ENCODE measurements at regions of chr22 and their contacts with region 1.

Region 1: GRCh38 chr22:31630331-31631329 is 31.4 kb downstream of the PISD start:
- DNase-seq: peak; percentile 73 to 91 (median 83)
- H3K4me3 ChIP-seq: peak overlapping the region; percentile 47 to 80 (median 55)
- H3K4me3 Mint-ChIP-seq: peak overlapping the region; percentile 81 to 87
- H3K27ac ChIP-seq: peak overlapping the region; percentile 73 to 75
- H3K27ac Mint-ChIP-seq: peak overlapping the region; percentile 86 to 96 (median 90)
- H3K4me1 ChIP-seq: peaks cover 51 to 66% of the 10 kb centered on the region in 2 donors
- H3K4me1 Mint-ChIP-seq: peaks cover 60% of the 10 kb centered on the region
- H3K27me3 ChIP-seq: no peaks in the 10 kb centered on the region
- H3K27me3 Mint-ChIP-seq: peaks cover 0 to 3% (median 0%) of the 10 kb centered on the region in 3 donors
- CTCF ChIP-seq: no peak

Region 2: GRCh38 chr22:31345331-31346254 is 285.0 kb before region 1 on chr22:
- intact Hi-C with region 1: loop called (anchors 5 to 10 kb)
- DNase-seq: peak; percentile 74 to 84 (median 80)
- H3K4me3 ChIP-seq: peak overlapping the region; percentile 62 to 86 (median 80)
- H3K4me3 Mint-ChIP-seq: peak overlapping the region; percentile 81 to 90
- H3K27ac ChIP-seq: peak overlapping the region in 1 of 2 donors; percentile 41
- H3K27ac Mint-ChIP-seq: peak overlapping the region in 6 of 7 donors; percentile 58 to 85 (median 68)
- H3K4me1 ChIP-seq: peaks cover 37 to 47% of the 10 kb centered on the region in 2 donors
- H3K4me1 Mint-ChIP-seq: peaks cover 57% of the 10 kb centered on the region
- H3K27me3 ChIP-seq: no peaks in the 10 kb centered on the region
- H3K27me3 Mint-ChIP-seq: peaks cover 2 to 3% (median 2%) of the 10 kb centered on the region in 3 donors
- CTCF ChIP-seq: peak; percentile 97

Region 3: DNA sequence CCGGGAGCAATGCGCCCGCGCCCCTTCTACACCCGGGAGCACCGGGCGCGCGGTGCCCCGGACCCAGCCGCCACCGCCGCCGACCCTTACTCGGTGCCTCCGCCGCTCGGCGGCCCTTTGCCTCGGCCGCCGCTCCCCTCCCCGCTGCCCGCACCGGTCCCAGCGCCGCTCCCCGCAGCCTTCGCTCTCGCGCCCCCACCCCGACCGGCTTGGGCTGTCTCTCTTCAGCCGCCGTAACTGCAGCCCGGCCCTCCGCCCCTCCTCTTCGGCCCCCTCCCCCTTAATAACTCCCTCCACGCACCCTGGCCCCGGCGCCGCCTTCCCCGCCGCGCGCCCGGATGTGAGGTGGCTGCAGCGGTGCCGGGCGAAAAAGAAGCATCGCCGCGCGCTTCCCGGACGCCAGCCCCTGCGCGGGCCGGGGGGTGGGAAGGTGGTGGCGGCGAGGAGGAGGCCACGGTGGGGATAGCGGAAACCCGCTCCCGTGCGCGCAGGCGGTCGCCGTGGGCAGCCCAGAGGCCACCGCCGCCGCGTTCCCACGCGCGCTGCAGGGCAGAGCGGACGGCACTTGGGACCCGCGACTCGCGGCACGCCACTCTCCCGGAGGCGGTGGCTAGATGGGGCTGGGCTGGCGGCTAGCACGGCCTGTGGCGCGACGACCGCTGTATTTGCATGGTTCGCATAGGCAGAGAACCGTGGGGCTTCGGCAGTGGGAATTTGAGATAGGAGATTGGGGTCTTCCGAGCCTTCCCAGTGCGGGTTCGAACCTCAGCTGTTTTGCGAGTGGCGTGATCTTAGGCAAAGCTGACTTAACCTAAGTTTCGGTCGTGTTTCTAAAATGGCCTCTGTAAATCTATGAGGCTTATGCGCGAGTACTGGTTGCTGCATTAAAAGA is 140.8 kb before region 1 on chr22 and contains the start of gene EIF4ENIF1:
- intact Hi-C with region 1: loop called (anchors 5 to 10 kb)
- DNase-seq: peak; percentile 46 to 75 (median 69)
- H3K4me3 ChIP-seq: peak within 1 kb of the TSS; percentile 70 to 88 (median 81)
- H3K4me3 Mint-ChIP-seq: peak within 1 kb of the TSS; percentile 92 to 95
- H3K27ac ChIP-seq: peak within 1 kb of the TSS; percentile 94 to 98
- H3K27ac Mint-ChIP-seq: peak within 1 kb of the TSS; percentile 97 to 99 (median 98)
- H3K4me1 ChIP-seq: peaks cover 24 to 29% of the 10 kb centered on the region in 2 donors
- H3K4me1 Mint-ChIP-seq: peaks cover 28% of the 10 kb centered on the region
- H3K27me3 ChIP-seq: no peaks in the 10 kb centered on the region
- H3K27me3 Mint-ChIP-seq: peaks cover 0 to 3% (median 0%) of the 10 kb centered on the region in 3 donors
- CTCF ChIP-seq: no peak
- polyA plus RNA-seq, gene EIF4ENIF1: 2.5 to 17.0 (median 11.5) TPM

Region 4: DNA sequence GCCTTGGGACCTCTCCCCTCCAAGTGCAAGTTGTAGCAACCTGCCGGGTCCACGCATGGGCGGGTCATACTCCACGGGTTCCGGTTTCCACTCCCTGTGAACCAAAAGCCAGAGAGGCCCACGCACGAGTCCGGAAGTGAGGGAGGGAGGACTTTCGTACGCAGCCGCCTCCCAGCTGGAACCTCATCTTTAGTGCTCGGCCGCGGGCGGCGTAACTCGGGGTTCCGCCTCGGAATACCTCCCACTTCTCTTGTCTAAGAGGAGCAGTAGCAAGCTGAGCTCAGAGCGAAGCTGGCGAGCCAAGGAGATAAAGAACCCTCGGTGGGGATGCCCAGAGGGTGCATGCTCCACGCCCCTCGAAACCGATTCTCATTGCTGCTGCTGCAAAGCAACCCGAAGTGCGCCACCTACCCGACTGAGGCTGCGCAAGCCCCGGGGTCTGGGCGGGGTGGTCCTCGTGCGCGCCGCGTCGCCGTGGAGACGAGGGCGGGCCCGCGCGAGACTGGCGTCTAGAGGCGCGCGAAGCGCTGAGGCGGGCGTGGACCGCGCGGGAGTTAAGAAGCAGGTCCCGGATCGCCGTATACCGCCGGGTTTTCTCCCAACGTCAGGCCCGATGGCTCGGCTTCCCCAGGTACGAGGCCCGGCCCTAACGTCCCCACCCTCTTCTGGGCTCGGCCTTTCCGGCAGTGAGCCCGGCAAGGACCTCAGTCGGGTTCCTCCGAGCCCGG is 134.5 kb before region 1 on chr22 and contains the start of gene SFI1:
- intact Hi-C with region 1: loop called in 1 of 2 experiments (anchors 10 kb)
- DNase-seq: peak; percentile 82 to 85 (median 84)
- H3K4me3 ChIP-seq: peak within 1 kb of the TSS; percentile 49 to 93 (median 90)
- H3K4me3 Mint-ChIP-seq: peak within 1 kb of the TSS; percentile 92 to 96
- H3K27ac ChIP-seq: peak within 1 kb of the TSS; percentile 82 to 83
- H3K27ac Mint-ChIP-seq: peak within 1 kb of the TSS; percentile 89 to 96 (median 94)
- H3K4me1 ChIP-seq: peaks cover 22 to 30% of the 10 kb centered on the region in 2 donors
- H3K4me1 Mint-ChIP-seq: peaks cover 18% of the 10 kb centered on the region
- H3K27me3 ChIP-seq: no peaks in the 10 kb centered on the region
- H3K27me3 Mint-ChIP-seq: peaks cover 0 to 3% (median 2%) of the 10 kb centered on the region in 3 donors
- CTCF ChIP-seq: peak; percentile 25
- polyA plus RNA-seq, gene SFI1: 1.7 to 43.4 (median 3.6) TPM

Region 5: GRCh38 chr22:31561238-31561887 is 69.3 kb before region 1 on chr22:
- intact Hi-C with region 1: loop called (anchors 2 to 5 kb)
- DNase-seq: peak; percentile 6 to 31 (median 11)
- H3K4me3 ChIP-seq: no peak overlapping the region
- H3K4me3 Mint-ChIP-seq: no peak overlapping the region
- H3K27ac ChIP-seq: no peak overlapping the region
- H3K27ac Mint-ChIP-seq: peak overlapping the region in 2 of 7 donors; percentile 25 to 32
- H3K4me1 ChIP-seq: no peaks in the 10 kb centered on the region
- H3K4me1 Mint-ChIP-seq: no peaks in the 10 kb centered on the region
- H3K27me3 ChIP-seq: no peaks in the 10 kb centered on the region
- H3K27me3 Mint-ChIP-seq: peaks cover 0 to 1% (median 0%) of the 10 kb centered on the region in 3 donors
- CTCF ChIP-seq: peak; percentile 56

Region 6: DNA sequence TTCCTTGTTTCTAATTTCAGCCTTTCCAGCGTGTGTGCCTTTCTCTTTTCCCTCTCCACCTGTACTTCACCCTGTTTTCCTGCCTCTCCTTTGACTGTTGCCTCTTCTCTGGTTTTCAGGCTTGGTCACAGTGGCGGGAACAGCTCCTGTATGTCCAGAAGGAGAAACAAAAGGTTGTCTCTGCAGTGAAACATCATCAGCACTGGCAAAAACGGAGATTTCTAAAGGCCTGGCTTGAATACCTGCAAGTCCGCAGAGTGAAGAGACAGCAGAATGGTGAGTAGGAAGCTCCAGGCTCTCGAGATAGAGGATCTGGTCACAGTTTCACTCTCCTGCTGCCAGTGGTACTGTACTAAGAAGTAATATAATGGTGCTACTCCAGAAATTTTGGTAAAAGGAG is 57.7 kb before region 1 on chr22:
- intact Hi-C with region 1: no loop called
- DNase-seq: no peak
- H3K4me3 ChIP-seq: no peak overlapping the region
- H3K4me3 Mint-ChIP-seq: no peak overlapping the region
- H3K27ac ChIP-seq: no peak overlapping the region
- H3K27ac Mint-ChIP-seq: peak overlapping the region in 1 of 7 donors; percentile 57
- H3K4me1 ChIP-seq: no peaks in the 10 kb centered on the region
- H3K4me1 Mint-ChIP-seq: peaks cover 2% of the 10 kb centered on the region
- H3K27me3 ChIP-seq: no peaks in the 10 kb centered on the region
- H3K27me3 Mint-ChIP-seq: peaks cover 0 to 2% (median 0%) of the 10 kb centered on the region in 3 donors
- CTCF ChIP-seq: no peak

Measured in CD14-positive monocyte (primary cell).